Vagina (tissue), 2 donors: ENCODE measurements at regions of chr7 and their contacts with region 1.

Region 1: DNA sequence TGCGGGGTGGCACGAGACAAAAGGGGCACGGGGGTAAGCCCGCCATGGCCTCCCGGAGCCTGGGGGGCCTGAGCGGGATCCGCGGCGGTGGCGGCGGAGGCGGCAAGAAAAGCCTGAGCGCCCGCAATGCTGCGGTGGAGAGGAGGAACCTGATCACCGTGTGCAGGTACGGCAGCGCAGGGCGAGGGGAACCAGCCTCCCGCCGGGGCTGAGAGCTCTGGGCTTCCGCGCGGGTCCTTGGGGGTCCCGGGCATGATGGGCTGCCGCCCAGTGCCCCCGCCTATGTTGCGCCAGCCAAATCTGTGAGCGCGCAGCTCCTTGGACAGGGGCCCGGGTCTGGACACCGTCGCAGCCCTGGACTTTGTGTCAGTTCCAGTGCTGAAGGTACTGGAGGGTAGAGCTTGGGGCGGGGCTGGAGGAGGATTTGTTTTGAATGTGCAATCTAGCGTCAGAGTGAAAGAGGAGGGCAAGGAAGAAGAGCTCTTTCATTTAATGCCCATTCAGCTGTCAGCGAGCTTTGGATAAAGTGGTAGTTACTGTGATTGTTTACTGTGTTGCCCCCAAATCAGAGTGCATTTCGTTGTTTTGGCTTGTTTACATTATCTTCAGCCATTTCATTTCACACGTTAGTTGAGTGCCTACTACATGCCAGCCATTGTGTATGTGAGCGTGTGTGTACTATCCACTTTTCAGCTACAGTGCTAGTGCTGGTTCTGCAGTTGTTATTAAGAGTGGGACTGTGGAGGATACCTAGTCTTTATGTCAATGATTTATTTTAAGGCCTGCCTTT is 777 bp downstream of the RUNDC3B start:
- DNase-seq: no peak
- H3K4me3 ChIP-seq: peak overlapping the region; percentile 61 to 64
- H3K27ac ChIP-seq: peak overlapping the region; percentile 57
- H3K4me1 ChIP-seq: peaks cover 21% of the 10 kb centered on the region
- H3K27me3 ChIP-seq: no peaks in the 10 kb centered on the region
- CTCF ChIP-seq: no peak
- POLR2A ChIP-seq: no peak

Region 2: DNA sequence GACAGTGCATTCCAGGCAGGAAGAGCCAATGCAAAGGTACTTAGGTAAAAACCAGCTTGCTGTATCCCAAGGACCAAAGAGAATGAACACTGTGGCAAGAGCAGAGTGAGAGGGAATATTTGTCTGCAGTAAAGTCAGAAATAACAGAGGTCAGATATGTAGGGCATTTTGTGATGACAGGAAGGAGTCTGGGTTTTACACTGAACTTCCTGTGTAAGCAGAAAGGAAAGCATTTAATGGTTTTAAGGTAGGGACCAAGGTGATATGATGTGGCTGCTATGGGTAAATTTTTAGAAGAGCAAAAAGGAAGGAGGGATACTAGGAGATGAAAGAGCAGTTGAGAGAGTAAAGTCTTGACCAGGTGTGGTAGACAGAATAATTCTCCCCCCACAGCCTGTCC is 38.4 kb before region 1 on chr7:
- intact Hi-C with region 1: loop called (anchors 5 kb)
- DNase-seq: no peak
- H3K4me3 ChIP-seq: no peak overlapping the region
- H3K27ac ChIP-seq: no peak overlapping the region
- H3K4me1 ChIP-seq: no peaks in the 10 kb centered on the region
- H3K27me3 ChIP-seq: no peaks in the 10 kb centered on the region
- CTCF ChIP-seq: no peak
- POLR2A ChIP-seq: no peak